ENCODE measurements at regions of chr2 and their contacts with region 1.

Region 1: DNA sequence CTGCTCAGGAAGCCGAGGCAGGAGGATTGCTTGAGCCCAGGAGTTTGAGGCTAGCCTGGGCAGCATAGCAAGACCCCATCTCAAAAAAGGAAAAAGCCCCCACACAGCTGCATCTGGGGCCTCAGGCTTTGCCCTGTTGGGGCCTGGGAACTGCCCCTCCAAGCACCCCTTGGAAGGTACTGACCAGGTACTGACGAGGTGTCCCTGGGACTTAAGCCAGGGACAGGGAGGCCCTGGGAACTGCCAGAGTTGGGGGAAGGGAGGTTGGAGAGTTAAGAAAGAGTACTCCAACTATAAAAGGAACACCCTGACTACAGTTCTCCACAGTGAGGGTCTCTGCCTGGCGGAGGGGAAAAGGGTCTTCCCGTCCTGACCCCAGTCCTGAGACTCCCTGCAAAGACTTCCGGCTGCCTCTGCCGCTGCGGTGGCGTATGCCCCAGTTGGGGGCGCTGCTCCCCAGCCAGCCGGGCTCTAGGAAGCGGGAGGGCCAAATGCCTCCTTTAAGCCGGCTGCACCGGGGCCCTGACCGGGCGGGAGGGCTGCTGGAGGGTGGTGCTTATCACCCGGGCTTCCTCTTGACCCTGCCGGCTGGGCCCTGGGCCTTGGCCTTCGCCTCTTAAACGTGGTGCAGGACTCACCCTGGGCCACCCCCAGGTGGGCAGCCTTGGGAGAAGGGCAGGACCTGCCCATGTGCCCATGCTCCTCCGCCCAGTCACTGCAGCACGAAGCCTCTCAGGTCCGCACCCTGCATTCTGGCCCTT is 12.8 kb downstream of the SLC30A3 start:
- DNase-seq: peak in 7 of 10 donors; percentile 31 to 93 (median 59)

Region 2: DNA sequence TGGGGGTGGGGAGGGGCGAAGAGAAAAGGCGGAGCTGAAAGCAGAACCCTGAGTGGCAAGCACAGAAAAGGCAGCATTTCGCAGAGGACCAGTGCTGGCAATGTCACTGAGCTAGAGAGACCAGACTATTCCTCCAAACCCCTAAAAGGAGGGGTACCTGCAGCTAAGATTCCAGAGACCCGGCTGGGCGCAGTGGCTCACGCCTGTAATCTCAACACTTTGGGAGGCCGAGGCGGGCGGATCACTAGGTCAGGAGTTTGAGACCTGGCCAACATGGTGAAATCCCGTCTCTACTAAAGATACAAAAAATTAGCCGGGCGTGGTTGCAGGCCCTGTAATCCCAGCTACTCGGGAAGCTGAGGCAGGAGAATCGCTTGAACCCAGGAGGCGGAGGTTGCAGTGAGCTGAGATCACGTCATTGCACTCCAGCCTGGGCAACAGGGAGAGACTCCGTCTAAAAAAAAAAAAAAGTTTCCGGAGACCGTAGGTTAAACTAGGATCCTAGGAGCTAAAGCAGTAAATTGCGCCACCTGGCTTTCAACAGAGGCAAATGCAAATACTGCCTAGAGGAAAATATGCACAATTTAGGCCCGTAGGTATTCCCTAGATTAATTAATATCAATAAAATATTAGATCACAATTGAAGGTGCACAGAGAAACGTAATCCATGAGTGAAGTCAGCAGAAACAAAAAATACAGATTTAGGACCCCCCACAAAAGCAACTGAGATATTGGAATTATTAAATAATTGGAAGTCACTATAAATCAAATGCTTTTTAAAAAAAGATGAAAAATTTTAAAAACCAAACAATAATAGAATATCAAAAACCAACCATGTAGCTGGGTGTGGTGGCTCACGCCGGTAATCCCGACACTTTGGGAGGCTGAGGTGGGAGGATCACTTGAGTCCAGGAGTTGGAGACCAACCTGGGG is 53.3 kb after region 1 on chr2:
- intact Hi-C with region 1: loop called (anchors 10 kb)
- DNase-seq: peak in 3 of 10 donors; percentile 23 to 70 (median 42)